Right ventricle myocardium inferior (tissue), 1 donor: ENCODE measurements at regions of chr19 and their contacts with region 1.

Region 1: GRCh38 chr19:32345261-32346207 is at the start of gene ZNF507:
- DNase-seq: peak; percentile 91
- ATAC-seq: peak; percentile 95
- total RNA-seq, gene ZNF507: 14.7 TPM

Region 2: DNA sequence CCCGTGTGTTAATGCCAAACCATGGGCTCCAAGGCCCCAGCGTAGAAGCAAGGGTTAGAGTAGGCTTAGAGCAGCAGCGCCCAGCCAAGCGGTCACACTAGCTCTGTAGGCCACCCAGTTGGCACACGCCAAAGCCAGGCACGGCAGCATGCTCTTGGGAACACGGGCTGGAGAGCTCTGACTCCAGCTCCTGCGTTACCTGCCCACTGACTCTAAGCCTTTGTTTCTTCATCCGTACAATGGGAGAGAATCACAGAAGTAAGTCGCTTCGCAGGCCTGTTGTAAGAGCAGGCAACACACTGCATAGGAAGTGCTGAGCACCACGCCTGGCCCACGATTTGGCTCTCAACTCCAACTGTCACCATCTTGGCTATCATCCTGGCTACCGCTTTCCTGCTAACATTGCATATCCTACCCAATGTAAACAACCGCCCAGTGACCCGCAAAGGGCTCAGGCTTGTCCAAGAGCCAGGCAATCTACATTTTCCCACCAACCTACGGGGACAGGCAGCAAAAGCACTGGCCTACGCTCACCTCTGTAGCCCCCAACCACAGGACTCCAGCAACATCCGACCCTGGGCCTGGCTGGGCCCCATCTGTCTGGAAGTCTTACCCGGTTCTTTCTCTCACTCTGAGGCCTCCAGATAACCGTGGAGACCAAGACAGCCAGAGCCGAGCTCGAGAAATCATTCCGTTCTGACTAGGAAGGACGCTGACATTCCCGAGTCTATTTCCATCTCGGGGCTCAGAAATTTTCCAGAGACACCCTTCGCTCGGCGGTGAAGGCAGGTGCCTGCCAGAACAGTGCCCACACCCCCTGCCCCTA is 91.6 kb before region 1 on chr19:
- intact Hi-C with region 1: no loop called
- DNase-seq: no peak
- ATAC-seq: no peak

Region 3: GRCh38 chr19:32318880-32319520 is 26.5 kb before region 1 on chr19:
- intact Hi-C with region 1: no loop called
- DNase-seq: no peak
- ATAC-seq: no peak

Region 4: DNA sequence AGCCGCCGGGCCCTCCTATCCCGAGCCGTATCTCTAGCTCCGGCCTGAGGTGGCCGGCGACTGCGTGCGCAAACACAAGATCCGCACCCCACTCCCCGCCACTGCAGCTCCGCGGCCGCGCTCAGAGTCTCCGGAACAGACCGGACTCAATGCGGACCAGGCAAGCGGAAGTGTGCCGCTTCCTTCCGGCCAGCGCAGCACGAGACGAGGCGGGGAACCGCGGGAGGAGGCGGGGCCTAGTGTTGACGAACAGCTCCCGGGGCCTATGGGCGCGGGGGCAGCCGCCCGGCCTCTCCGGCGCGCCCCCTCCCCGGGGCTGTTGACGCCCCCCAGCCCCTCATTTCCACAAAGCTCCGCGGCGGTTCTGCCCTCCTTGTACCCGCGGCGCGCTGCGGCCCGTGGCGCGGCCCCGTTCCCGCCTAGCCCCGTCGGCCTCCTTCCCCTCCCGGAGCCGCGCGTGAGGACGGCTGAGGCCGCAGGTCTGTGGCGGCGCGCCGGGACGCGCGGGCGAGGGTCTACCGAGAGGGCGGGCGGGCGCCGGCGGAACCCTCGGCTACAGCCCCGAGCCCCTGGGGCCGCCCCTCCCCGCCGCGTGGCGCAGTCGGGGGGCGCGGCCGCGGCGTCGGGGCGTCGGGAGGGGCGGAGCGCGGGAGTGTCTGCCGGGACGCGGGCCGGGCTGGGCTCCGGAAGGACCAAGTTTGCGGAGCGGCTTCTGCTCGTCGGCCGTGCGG is 60.1 kb after region 1 on chr19 and contains the start of gene DPY19L3:
- intact Hi-C with region 1: loop called (anchors 1 kb)
- DNase-seq: peak; percentile 98
- ATAC-seq: peak; percentile 99
- total RNA-seq, gene DPY19L3: 5.2 TPM

Region 5: GRCh38 chr19:32580901-32581703 is 235.6 kb after region 1 on chr19 and contains the start of gene PDCD5:
- intact Hi-C with region 1: loop called (anchors 2 kb)
- DNase-seq: peak; percentile 99
- ATAC-seq: peak; percentile 99
- total RNA-seq, gene PDCD5: 133 TPM

Region 6: DNA sequence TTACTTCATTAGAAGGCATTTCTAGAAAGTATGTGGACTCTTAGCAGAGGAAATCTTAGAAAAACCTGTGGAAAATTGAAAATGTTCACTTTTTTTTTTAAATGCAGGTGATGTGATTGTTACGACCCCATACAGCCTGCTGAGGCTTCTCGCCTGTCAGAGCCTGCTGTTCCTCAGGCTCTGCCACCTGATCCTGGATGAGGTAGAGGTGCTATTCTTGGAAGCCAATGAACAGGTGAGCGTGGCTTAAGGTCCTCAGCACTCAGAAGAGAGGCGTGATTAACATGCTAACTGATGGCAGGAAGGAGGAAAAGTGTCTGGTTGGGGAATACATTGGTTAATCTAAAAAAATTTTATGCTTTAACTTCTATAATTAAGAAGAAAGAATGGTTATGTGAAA is 452.7 kb after region 1 on chr19:
- intact Hi-C with region 1: no loop called
- DNase-seq: no peak
- ATAC-seq: no peak